Caco-2 (cell line): ENCODE measurements at regions of chr22 and their contacts with region 1.

Region 1: GRCh38 chr22:46006379-46007002 is 29.5 kb upstream of the WNT7B start:
- DNase-seq: peak; percentile 89 to 90
- H3K4me3 ChIP-seq: no peak overlapping the region
- H3K4me3 Mint-ChIP-seq: no peak overlapping the region
- H3K27ac Mint-ChIP-seq: no peak overlapping the region
- H3K4me1 ChIP-seq: peaks cover 8% of the 10 kb centered on the region; the same call in 1 of the 2 replicates
- H3K4me1 Mint-ChIP-seq: no peaks in the 10 kb centered on the region
- H3K27me3 ChIP-seq: no peaks in the 10 kb centered on the region
- H3K27me3 Mint-ChIP-seq: no peaks in the 10 kb centered on the region
- CTCF ChIP-seq: peak; percentile 87 to 90

Region 2: DNA sequence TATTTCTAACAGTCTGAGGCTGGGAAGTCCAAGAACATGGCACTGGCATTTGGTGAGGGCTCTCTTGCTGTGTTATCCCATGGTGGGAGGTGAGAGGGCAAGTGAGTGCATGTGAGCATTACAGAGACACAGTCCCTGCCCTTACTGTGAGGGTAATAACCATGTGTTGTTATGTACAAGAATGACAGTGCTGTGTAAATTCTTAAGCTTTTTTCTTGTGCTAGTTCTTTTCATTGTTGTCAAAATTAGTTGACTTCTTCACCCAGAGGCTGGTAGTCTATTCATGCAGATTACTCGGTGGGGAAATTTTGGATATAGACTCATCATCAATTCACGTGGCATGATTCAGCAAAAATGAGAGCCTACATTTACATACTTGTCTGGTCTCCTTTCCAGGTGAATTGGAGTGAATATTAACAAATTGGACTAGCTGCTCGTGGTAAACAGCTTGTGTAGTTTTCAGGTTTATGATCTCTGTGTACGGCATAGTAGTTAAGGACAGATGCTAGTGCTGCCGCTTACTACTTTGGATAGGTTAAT is 285.6 kb before region 1 on chr22:
- CTCF ChIA-PET with region 1: no interaction called
- POLR2A ChIA-PET with region 1: no interaction called
- intact Hi-C with region 1: no loop called
- DNase-seq: no peak
- H3K4me3 ChIP-seq: no peak overlapping the region
- H3K4me3 Mint-ChIP-seq: no peak overlapping the region
- H3K27ac Mint-ChIP-seq: no peak overlapping the region
- H3K4me1 ChIP-seq: no peaks in the 10 kb centered on the region
- H3K4me1 Mint-ChIP-seq: no peaks in the 10 kb centered on the region
- H3K27me3 ChIP-seq: no peaks in the 10 kb centered on the region
- H3K27me3 Mint-ChIP-seq: no peaks in the 10 kb centered on the region
- CTCF ChIP-seq: no peak

Region 3: DNA sequence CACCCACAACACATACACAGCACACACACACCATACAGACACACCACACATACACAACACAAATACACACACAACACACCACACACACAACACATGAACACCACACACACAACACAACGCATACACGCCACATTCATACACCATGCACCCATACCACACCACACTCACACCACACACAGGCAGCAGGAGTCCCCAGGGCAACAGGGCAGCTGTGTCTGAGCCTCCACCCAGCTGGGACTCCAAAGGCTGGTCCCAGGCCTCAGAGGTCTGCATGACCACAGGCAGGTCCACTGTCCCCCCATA is 26.3 kb before region 1 on chr22:
- CTCF ChIA-PET with region 1: no interaction called
- POLR2A ChIA-PET with region 1: no interaction called
- intact Hi-C with region 1: no loop called
- DNase-seq: no peak
- H3K4me3 ChIP-seq: no peak overlapping the region
- H3K4me3 Mint-ChIP-seq: no peak overlapping the region
- H3K27ac Mint-ChIP-seq: no peak overlapping the region
- H3K4me1 ChIP-seq: peaks cover 19% of the 10 kb centered on the region
- H3K4me1 Mint-ChIP-seq: no peaks in the 10 kb centered on the region
- H3K27me3 ChIP-seq: peaks cover 5% of the 10 kb centered on the region; the same call in 1 of the 2 replicates
- H3K27me3 Mint-ChIP-seq: no peaks in the 10 kb centered on the region
- CTCF ChIP-seq: no peak

Region 4: DNA sequence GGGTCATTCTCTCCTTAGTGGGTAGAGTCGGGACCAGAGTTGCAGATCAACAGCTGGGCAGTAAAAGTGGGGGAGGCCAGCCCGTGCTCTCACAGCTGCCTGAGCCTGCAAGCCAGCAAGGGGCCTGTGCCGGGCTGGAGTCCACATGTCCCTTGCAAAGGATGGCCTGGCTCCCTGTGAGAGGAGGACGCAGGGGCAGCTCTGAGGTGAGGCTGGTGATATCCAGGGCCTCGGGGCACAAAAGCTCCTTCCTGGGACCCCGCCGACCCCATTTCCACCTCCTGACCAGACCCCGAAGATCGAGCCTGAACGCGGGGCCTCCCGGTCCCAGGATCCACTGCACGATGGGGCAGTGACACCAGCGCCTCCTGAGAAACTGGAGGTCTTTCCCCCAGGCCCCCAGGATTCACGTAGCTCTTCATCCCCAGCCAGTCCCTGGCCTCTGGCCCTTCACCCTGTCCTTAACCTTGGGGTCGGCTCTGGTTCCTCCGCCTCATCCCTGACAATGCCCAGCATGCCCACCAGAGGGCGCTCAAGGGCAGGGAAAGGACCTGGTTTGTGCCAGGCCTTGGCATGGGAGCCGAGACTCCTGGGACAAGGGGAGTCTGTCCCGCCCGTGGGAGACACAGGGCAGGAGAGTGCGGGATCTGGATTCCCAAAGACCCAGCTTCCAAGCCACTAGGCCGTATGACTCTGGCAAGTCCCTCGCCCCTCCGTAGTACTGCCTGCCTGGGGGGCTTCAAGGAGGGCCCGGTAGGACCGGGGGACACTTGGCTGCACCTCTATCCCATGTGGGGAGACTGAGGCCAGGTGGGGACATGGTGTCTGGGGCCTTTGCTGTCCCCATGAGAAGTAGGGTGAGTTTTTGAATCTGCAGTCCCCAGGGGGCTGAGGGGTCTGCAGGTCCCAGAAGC is 11.7 kb before region 1 on chr22:
- CTCF ChIA-PET with region 1: interaction called, 33 read pairs
- POLR2A ChIA-PET with region 1: no interaction called
- intact Hi-C with region 1: no loop called
- DNase-seq: peak; percentile 73 to 90
- H3K4me3 ChIP-seq: no peak overlapping the region
- H3K4me3 Mint-ChIP-seq: no peak overlapping the region
- H3K27ac Mint-ChIP-seq: no peak overlapping the region
- H3K4me1 ChIP-seq: no peaks in the 10 kb centered on the region
- H3K4me1 Mint-ChIP-seq: no peaks in the 10 kb centered on the region
- H3K27me3 ChIP-seq: no peaks in the 10 kb centered on the region
- H3K27me3 Mint-ChIP-seq: no peaks in the 10 kb centered on the region
- CTCF ChIP-seq: peak; percentile 88 to 95

Region 5: DNA sequence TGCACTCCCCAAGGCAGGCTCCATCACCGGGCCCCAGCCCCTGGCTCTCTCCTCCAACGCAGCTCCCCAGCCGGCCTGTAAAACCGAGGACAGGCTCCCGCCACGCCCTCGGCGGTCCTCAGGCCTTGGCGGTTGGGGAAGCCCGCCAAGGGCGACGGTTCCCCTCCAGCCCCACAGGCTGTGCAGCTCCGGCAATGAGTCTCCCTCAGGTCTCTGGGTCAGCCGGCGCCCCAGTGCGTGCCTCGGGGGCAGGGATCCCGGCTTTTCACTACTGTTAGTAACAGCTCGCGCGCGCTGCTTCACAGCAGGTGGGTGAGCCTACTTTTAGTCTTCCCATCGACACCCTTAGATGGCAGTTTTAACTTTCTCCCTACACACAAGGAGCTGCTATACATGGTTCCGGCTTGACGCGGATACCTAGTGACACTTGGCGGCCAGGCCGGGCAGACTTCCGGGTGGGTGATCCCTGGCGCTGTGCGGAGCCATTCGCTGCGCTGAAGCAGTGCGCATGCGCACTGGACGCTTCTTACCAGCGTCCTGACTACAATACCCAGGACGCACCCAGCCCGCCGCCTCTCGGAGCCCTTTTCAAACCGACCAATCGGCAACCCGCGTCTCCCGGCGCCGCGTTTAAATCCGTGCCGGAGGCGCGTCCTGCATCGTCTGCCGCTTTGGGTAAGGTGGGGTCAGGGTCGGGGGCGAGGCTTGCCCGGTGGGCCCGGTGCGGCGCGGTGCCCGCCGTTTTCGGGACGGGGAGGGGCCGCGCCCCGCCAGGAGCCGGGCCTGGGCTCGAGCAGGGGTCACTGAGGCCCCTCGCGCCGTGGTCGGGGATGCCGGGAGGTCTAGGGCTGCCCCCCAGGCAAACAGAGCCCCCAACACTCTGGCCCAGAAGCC is 290.0 kb after region 1 on chr22 and contains the start of gene GTSE1:
- CTCF ChIA-PET with region 1: no interaction called
- POLR2A ChIA-PET with region 1: no interaction called
- intact Hi-C with region 1: no loop called
- DNase-seq: peak; percentile 95 to 97
- H3K4me3 ChIP-seq: peak within 1 kb of the TSS; percentile 69
- H3K4me3 Mint-ChIP-seq: peak within 1 kb of the TSS; percentile 84
- H3K27ac Mint-ChIP-seq: peak within 1 kb of the TSS; percentile 87
- H3K4me1 ChIP-seq: peaks cover 8% of the 10 kb centered on the region; the same call in 1 of the 2 replicates
- H3K4me1 Mint-ChIP-seq: peaks cover 30% of the 10 kb centered on the region
- H3K27me3 ChIP-seq: no peaks in the 10 kb centered on the region
- H3K27me3 Mint-ChIP-seq: no peaks in the 10 kb centered on the region
- CTCF ChIP-seq: peak in 1 of 2 experiments; percentile 25
- total RNA-seq, gene GTSE1: 54.4 and 55.1 TPM in 2 replicates